MCF 10A (cell line): ENCODE measurements at regions of chr16 and their contacts with region 1.

Region 1: DNA sequence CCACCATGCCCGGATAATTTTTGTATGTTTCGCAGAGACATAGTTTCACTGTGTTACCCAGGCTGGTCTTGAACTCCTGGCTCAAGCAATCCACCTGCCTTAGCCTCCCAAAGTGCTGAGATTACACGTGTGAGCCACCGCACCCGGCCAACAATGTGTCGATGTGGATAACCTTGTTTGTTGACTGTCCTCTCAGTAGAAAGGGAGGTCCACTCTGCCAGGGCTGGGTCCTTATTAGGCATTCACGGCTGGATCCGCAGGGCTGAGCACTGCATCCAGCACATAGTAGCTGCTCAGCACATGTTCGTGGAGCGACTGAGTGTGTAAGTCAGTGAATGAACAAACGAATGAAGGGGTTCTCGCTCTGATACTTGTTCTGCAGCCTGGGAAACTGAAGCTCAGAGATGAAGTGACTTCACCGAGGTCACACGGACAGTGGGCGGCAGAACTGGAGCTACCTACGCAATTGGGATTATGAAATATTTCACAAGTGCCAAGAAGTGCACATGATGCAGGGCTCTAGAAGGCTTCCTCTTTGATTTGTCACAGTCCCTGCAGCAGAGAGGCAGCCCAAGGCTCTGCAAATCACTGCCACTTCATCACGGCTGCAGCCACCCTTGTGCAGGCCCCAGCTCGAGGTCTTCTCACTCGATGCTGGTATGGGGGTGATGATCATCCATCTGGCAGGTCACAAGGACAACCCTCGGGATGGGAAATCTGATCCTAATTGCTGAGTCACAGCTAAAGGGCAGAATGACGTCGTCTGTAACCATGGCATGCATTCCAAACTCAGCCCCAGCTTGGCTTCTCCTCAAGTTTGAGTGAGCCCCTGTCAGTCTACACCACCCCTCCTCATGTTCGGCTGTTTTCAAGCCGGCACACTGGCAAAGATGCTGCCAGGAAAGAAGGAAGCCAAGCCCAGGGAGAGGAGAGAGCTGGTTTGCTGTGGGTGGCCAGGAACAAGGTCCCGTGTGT is 28.0 kb upstream of the SNN start:
- DNase-seq: peak; percentile 97
- H3K4me3 Mint-ChIP-seq: peak overlapping the region; percentile 44
- H3K27ac Mint-ChIP-seq: peak overlapping the region; percentile 89
- H3K4me1 Mint-ChIP-seq: peaks cover 23% of the 10 kb centered on the region
- H3K27me3 Mint-ChIP-seq: no peaks in the 10 kb centered on the region
- CTCF ChIP-seq: no peak

Region 2: DNA sequence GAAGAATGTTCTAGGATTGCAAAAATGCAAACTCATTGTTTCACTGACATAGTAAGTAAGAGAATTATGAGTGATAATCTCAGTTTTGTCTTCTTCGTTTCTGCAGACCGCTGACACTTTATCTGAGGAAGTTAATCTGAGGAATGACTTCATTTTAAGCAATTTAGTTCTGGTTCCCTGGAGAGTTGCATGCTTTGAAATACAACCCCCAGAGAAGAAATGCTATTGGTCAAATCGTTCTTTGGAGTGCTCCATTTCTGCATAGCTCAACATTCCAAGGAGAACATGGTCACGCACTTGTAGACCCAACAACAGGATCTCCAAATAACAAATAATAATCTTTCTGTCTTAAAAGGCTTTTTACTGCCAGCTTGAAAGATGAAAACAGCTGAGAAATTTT is 1885.1 kb before region 1 on chr16:
- CTCF ChIA-PET with region 1: no interaction called
- POLR2A ChIA-PET with region 1: no interaction called
- intact Hi-C with region 1: no loop called
- DNase-seq: no peak
- H3K4me3 Mint-ChIP-seq: no peak overlapping the region
- H3K27ac Mint-ChIP-seq: no peak overlapping the region
- H3K4me1 Mint-ChIP-seq: no peaks in the 10 kb centered on the region
- H3K27me3 Mint-ChIP-seq: no peaks in the 10 kb centered on the region
- CTCF ChIP-seq: no peak

Region 3: DNA sequence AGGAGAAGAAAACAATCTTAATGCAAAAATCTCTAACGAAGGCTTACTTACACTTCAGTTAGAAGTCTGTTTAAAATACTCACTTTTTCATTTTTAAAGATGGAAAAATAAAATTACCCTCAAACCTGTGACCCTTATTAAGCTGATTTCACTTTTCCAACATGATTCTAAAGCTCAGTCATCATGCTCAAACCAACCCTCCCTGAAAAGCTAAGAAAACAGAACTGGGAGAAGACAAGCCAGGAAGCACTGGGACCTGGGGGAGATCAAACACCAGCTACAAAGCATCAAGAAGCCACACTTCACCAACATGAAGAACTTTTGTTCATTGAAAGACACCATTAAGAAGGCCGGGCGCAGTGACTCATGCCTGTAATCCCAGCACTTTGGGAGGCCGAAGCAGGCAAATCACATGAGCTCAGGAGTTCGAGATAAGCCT is 142.3 kb before region 1 on chr16:
- CTCF ChIA-PET with region 1: interaction called, 6 read pairs
- POLR2A ChIA-PET with region 1: interaction called, 12 read pairs
- intact Hi-C with region 1: loop called (anchors 1 kb)
- DNase-seq: peak; percentile 75
- H3K4me3 Mint-ChIP-seq: peak overlapping the region; percentile 41
- H3K27ac Mint-ChIP-seq: peak overlapping the region; percentile 97
- H3K4me1 Mint-ChIP-seq: peaks cover 20% of the 10 kb centered on the region
- H3K27me3 Mint-ChIP-seq: no peaks in the 10 kb centered on the region
- CTCF ChIP-seq: no peak

Region 4: GRCh38 chr16:11535471-11535870 is 104.7 kb before region 1 on chr16:
- CTCF ChIA-PET with region 1: interaction called, 23 read pairs
- POLR2A ChIA-PET with region 1: interaction called, 30 read pairs
- intact Hi-C with region 1: loop called (anchors 1 kb)
- DNase-seq: peak; percentile 91
- H3K4me3 Mint-ChIP-seq: no peak overlapping the region
- H3K27ac Mint-ChIP-seq: no peak overlapping the region
- H3K4me1 Mint-ChIP-seq: peaks cover 17% of the 10 kb centered on the region
- H3K27me3 Mint-ChIP-seq: no peaks in the 10 kb centered on the region
- CTCF ChIP-seq: no peak

Region 5: DNA sequence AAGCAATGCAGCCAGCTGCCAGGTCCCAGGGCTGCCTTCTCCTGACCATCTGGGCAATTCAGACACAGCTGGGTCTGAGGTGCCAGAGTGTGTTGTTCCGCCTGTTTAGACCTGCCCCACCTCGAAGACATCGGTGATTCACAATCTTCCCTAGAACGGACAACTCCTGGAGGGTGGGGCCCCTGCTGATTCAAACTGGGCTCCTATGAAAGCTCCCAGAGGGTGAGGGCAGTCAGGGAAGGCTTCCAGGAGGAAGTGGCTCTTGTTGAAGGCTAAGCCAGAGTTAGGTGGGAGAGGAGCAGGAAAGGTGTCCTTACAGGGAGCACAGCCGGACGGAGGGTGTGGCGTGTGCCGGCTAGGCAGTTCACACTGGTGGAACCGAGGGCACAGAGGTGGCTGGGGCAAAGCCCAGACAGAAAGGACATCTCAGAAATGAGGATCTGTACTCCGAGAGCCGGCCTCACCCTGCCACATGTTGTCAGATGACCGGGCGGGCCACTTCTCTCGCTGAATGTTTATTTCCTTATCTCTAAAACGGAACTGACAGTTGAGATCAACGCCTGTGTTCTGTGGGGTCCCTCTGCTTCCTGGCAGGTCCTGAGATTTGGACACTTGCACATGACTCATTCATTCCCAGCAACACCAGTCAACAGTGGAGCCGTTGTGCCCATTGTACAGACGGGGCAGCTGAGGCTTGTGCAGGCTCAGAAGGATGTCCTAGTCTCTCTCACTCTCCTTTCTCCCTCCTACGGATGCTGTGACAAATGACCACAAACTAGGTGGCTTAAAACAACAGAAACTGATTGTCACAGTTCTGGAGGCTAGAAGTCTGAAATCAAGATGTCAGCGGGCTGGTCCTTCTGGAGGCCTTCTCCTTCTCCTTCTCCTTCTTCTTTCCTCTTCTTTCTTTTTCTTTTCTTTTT is 26.6 kb before region 1 on chr16:
- CTCF ChIA-PET with region 1: interaction called, 5 read pairs
- POLR2A ChIA-PET with region 1: interaction called, 26 read pairs
- intact Hi-C with region 1: no loop called
- DNase-seq: peak; percentile 96
- H3K4me3 Mint-ChIP-seq: peak overlapping the region; percentile 39
- H3K27ac Mint-ChIP-seq: peak overlapping the region; percentile 90
- H3K4me1 Mint-ChIP-seq: peaks cover 28% of the 10 kb centered on the region
- H3K27me3 Mint-ChIP-seq: no peaks in the 10 kb centered on the region
- CTCF ChIP-seq: no peak

Region 6: DNA sequence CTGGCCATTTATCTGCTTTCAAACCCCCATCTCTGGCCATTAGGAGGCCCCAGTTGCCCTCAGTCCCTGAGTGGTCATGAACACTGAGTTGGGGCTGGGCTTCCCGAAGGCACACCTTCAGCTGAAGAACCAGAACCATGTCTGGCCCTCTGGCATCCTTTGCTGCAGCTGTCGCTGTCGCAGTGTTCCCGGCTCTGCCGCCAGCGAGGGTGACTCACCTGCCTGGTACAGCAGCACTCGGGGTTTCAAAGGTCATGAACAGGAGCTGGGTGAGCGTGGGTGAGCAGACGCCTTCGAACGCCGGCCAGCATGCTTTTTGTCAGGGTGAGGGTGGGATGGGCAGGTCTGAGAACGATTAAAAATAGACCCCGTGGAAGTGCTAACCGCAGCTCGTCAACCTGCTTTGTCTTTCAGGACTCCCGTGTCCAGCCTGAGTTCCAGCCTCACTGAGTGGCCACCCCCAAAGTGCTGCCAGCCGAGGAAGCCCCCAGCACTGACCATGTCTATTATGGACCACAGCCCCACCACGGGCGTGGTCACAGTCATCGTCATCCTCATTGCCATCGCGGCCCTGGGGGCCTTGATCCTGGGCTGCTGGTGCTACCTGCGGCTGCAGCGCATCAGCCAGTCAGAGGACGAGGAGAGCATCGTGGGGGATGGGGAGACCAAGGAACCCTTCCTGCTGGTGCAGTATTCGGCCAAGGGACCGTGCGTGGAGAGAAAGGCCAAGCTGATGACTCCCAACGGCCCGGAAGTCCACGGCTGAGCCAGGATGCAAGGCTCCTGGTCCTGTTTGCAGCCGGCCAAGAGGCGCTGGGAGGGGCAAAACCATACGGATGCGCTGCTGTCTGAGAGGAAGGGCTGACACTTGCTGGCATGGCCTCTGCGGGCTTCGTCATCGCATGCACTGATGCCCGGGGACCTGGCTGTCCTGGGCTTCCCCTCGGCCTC is 35.6 kb after region 1 on chr16:
- CTCF ChIA-PET with region 1: interaction called, 8 read pairs
- POLR2A ChIA-PET with region 1: interaction called, 13 read pairs
- intact Hi-C with region 1: no loop called
- DNase-seq: peak; percentile 80
- H3K4me3 Mint-ChIP-seq: no peak overlapping the region
- H3K27ac Mint-ChIP-seq: no peak overlapping the region
- H3K4me1 Mint-ChIP-seq: peaks cover 28% of the 10 kb centered on the region
- H3K27me3 Mint-ChIP-seq: no peaks in the 10 kb centered on the region
- CTCF ChIP-seq: no peak

Region 7: DNA sequence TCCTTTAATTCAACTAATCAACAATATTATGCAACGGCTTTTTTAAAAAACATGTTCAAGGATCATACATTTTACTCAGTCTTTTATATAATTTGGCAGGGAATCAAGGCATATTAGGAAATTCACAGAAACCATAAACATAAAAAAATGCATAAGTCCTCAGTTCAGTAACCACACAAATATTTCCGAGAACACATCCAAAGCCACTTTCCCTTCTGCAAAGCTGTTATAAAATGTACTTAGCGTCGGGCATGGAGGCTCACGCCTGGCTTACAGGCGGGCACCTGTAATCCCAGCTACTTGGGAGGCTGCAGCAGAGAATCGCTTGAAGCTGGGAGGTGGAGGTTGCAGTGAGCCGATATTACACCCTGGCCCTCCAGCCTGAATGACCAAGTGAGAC is 166.5 kb after region 1 on chr16:
- CTCF ChIA-PET with region 1: no interaction called
- POLR2A ChIA-PET with region 1: no interaction called
- intact Hi-C with region 1: loop called (anchors 5 kb)
- DNase-seq: peak; percentile 70
- H3K4me3 Mint-ChIP-seq: no peak overlapping the region
- H3K27ac Mint-ChIP-seq: no peak overlapping the region
- H3K4me1 Mint-ChIP-seq: peaks cover 7% of the 10 kb centered on the region
- H3K27me3 Mint-ChIP-seq: no peaks in the 10 kb centered on the region
- CTCF ChIP-seq: no peak